Activated CD4-positive, alpha-beta memory T cell treated with anti-CD3 and anti-CD28 coated beads for 36 hours (primary cell): ENCODE measurements at regions of chr20 and their contacts with region 1.

Region 1: DNA sequence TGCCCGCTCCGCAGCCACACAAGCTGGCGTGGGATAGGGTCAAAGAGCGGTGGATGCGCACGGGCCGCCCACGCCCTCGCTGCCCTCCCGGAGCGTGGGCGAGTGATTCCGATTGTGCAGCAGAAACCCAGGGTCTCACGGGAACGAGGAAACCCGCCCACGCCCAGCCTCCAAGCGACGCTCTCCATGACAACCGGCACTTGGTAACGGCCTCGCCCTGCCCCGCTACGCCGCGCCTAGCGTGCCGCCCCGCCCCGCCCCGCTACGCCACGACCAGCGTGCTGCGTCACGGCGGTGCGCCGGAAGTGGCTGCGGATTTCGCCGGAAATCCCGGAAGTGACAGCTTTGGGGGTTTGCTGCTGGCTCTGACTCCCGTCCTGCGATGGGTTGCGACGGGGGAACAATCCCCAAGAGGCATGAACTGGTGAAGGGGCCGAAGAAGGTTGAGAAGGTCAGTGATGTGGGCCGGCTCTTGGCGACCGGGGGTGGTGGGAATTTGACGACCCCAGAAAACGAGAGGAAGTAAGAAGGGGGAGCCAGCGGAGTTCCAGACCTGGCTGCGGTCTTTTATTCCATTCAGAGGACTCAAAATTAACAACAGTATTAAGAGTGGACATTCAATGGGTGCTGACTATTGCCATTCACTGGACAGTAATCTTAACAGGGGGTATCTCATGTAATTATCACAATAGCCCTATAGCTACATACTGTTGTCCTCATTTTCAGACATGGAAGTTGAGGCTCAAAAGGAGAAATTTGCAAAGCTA is at the start of gene RTF2:
- DNase-seq: peak; percentile 98
- H3K4me3 Mint-ChIP-seq: peak within 1 kb of the TSS; percentile 100
- H3K27ac Mint-ChIP-seq: peak within 1 kb of the TSS; percentile 99
- H3K4me1 Mint-ChIP-seq: peaks cover 35% of the 10 kb centered on the region
- H3K27me3 Mint-ChIP-seq: no peaks in the 10 kb centered on the region
- total RNA-seq, gene RTF2: 81.8 to 83.1 TPM

Region 2: DNA sequence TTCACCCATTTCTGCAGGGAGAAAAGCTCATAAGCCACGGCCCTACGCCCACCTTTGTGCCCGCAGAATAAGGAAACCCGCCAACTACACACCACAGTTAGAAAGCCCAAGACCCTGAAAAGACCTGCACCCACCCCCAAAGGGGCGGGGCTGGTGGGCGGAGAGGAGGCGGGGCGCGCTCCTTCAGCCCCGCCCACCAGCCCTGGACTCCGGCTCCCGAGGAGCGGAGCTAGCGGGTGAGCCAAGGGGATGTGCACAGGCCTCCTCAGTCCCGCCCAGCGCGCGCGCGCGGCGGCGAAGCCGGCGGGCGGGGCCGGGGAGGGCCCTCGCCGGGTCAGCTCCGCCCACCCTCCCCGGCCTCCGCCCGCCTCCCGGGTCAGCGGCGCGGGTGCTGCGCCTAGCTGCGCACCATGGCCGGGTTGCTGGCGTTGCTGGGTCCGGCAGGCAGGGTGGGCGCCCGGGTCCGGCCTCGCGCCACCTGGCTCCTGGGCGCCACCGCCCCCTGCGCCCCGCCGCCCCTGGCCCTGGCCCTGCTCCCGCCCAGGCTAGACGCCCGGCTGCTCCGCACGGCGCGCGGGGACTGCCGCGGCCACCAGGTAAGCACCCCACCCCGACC is 109.8 kb before region 1 on chr20 and contains the start of gene FAM210B:
- CTCF ChIA-PET with region 1: no interaction called
- POLR2A ChIA-PET with region 1: no interaction called
- intact Hi-C with region 1: loop called (anchors 1 kb)
- DNase-seq: peak; percentile 88
- H3K4me3 Mint-ChIP-seq: peak within 1 kb of the TSS; percentile 83
- H3K27ac Mint-ChIP-seq: no peak within 1 kb of the TSS
- H3K4me1 Mint-ChIP-seq: peaks cover 14% of the 10 kb centered on the region
- H3K27me3 Mint-ChIP-seq: no peaks in the 10 kb centered on the region
- total RNA-seq, gene FAM210B: 5.5 to 5.9 TPM

Region 3: GRCh38 chr20:56380375-56380774 is 88.1 kb before region 1 on chr20:
- CTCF ChIA-PET with region 1: no interaction called
- POLR2A ChIA-PET with region 1: no interaction called
- intact Hi-C with region 1: no loop called
- DNase-seq: no peak
- H3K4me3 Mint-ChIP-seq: no peak overlapping the region
- H3K27ac Mint-ChIP-seq: no peak overlapping the region
- H3K4me1 Mint-ChIP-seq: peaks cover 15% of the 10 kb centered on the region
- H3K27me3 Mint-ChIP-seq: no peaks in the 10 kb centered on the region

Region 4: DNA sequence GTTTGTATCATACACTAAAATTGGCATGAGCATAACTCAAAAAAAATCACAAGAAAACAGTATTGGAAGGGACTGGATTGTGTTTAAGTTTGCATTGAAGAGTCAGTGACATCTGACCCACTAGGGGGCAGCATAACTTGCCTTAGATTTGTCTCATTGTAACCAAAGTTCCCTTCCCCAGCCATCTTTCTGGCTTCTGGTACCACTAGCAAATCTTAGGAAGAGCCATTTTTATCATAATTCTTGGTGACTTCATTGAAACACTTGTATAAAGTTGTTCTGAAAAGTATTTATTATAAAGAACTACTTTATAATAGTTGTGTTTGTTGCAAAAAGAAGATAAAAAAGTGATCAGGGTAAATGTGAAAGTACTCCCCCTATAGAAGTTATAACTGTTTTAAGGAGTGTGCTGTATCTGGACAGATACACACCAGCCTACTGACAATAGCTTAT is 68.4 kb before region 1 on chr20:
- CTCF ChIA-PET with region 1: interaction called, 11 read pairs
- POLR2A ChIA-PET with region 1: interaction called, 4 read pairs
- intact Hi-C with region 1: loop called (anchors 2 kb)
- DNase-seq: peak; percentile 68
- H3K4me3 Mint-ChIP-seq: no peak overlapping the region
- H3K27ac Mint-ChIP-seq: no peak overlapping the region
- H3K4me1 Mint-ChIP-seq: peaks cover 25% of the 10 kb centered on the region
- H3K27me3 Mint-ChIP-seq: no peaks in the 10 kb centered on the region

Region 5: GRCh38 chr20:56411759-56412472 is 56.6 kb before region 1 on chr20 and contains the start of gene CASS4:
- CTCF ChIA-PET with region 1: interaction called, 3 read pairs
- POLR2A ChIA-PET with region 1: interaction called, 6 read pairs
- intact Hi-C with region 1: loop called (anchors 1 kb)
- DNase-seq: peak; percentile 63
- H3K4me3 Mint-ChIP-seq: peak within 1 kb of the TSS; percentile 83
- H3K27ac Mint-ChIP-seq: peak within 1 kb of the TSS; percentile 91
- H3K4me1 Mint-ChIP-seq: peaks cover 59% of the 10 kb centered on the region
- H3K27me3 Mint-ChIP-seq: no peaks in the 10 kb centered on the region
- total RNA-seq, gene CASS4: 7.8 to 8.6 TPM

Region 6: DNA sequence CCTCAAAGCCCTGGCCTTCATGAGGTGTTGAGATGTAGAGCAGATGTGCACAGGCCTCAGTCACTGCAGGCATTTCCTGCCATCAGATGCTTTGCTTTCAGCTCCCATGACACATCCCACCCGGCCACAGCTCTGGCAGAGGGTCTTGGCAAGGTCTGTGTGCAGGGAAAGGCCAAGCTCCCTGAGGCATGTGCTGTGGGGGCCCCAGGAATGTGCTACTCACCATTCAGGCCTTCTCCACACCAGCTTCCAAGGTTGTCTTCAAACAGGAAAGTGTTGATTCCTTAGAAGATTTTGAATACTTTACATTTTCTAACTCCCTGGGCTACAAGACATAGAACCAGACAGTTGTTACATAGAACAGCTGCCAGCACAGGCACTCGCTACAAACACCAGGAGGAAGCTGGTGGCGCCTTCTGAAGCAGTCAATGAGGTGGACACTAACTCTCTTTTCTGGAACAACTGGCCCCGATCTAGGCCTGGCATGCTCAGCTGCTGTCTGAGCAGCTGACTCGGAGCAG is 28.7 kb before region 1 on chr20:
- CTCF ChIA-PET with region 1: no interaction called
- POLR2A ChIA-PET with region 1: no interaction called
- intact Hi-C with region 1: loop called (anchors 2 kb)
- DNase-seq: peak; percentile 41
- H3K4me3 Mint-ChIP-seq: peak overlapping the region; percentile 48
- H3K27ac Mint-ChIP-seq: peak overlapping the region; percentile 90
- H3K4me1 Mint-ChIP-seq: peaks cover 48% of the 10 kb centered on the region
- H3K27me3 Mint-ChIP-seq: no peaks in the 10 kb centered on the region

Region 7: DNA sequence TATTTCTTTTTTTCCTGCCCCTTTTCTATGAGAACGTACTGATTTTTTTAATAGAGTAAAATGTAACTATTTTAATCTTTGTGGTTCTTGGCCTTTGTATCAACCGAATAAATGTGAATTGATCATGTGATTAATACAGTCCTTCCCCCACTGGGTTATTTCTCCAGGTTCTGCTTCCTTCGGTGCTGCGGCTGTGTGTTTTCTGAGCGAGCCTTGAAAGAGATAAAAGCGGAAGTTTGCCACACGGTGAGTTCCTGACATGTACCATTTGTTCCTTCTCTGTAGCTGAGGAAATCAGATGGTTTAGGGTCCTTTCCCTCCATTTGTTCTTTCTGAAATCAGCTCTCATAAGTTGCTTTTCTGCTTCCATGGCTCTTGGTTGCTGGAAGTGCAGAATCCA is 15.4 kb after region 1 on chr20:
- CTCF ChIA-PET with region 1: no interaction called
- POLR2A ChIA-PET with region 1: no interaction called
- intact Hi-C with region 1: no loop called
- DNase-seq: no peak
- H3K4me3 Mint-ChIP-seq: no peak overlapping the region
- H3K27ac Mint-ChIP-seq: peak overlapping the region; percentile 59
- H3K4me1 Mint-ChIP-seq: peaks cover 30% of the 10 kb centered on the region
- H3K27me3 Mint-ChIP-seq: no peaks in the 10 kb centered on the region

Region 8: DNA sequence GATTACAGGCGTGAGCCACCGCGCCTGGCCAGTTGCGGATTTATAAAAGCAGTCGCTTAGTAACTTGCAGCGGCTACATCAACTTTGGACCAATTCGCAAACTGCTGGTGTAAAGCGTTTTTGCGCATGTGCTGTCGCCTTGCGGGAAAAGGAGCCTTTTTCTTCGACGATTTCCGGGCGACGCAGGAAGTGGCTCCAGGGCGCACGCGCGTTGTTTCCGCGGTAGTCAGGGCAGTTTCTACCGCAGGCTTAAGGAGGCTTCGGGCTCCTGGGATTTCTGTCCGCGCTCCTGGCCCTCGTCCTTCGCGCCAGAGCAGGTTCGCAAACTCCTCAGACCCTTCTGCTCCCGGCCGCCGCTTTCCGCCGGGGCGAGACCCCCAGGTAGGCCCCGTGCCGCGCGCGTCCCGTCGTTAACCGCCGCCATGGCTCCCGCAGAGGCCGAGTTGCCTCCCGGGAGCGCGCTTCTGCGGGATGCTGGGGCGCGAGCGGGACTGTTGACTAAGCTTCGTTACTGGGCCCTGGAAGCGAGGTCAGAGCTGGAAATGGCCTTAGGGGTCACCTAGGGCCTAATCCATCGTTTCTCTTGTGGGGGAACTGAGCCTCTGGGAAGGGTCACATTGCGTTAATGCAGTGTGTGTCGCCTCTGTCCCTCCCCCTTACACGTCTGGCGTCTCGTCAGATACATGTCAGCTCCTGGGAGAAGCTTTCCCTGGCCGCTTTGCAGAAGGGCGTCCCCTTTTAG is 882.7 kb after region 1 on chr20 and contains the start of gene RAE1:
- CTCF ChIA-PET with region 1: no interaction called
- POLR2A ChIA-PET with region 1: no interaction called
- intact Hi-C with region 1: loop called (anchors 1 kb)
- DNase-seq: peak; percentile 95
- H3K4me3 Mint-ChIP-seq: peak within 1 kb of the TSS; percentile 90
- H3K27ac Mint-ChIP-seq: peak within 1 kb of the TSS; percentile 85
- H3K4me1 Mint-ChIP-seq: peaks cover 23% of the 10 kb centered on the region
- H3K27me3 Mint-ChIP-seq: no peaks in the 10 kb centered on the region
- total RNA-seq, gene RAE1: 33.7 to 38.2 TPM